ENCODE measurements at regions of chr19 and their contacts with region 1.

Region 1: GRCh38 chr19:19591133-19591825 is 27.2 kb downstream of the PBX4 start:
- DNase-seq: peak; percentile 58
- H3K4me3 Mint-ChIP-seq: peak overlapping the region; percentile 51
- H3K27ac Mint-ChIP-seq: peak overlapping the region; percentile 93
- H3K4me1 Mint-ChIP-seq: peaks cover 57% of the 10 kb centered on the region
- H3K27me3 Mint-ChIP-seq: no peaks in the 10 kb centered on the region

Region 2: DNA sequence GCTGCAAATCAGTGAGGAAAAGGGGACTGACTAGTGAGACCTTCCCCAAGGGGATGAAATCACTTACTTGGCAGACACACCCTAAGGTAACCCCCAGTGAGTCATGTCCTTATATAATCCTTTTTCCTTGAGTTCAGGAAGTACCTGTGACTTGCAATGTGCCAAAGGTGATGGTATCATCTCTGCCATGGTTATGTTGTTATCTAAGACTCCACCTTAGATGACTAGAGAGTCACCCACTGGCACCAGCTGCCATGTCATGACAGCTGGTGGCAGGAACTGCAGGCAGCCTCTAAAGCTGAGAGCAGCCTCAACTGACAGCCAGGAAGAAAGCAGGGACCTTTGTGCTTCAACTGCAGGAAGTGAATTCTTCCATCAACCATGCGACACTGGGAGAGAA is 14.7 kb after region 1 on chr19:
- intact Hi-C with region 1: loop called (anchors 2 kb)
- DNase-seq: no peak
- H3K4me3 Mint-ChIP-seq: peak overlapping the region; percentile 45
- H3K27ac Mint-ChIP-seq: peak overlapping the region; percentile 84
- H3K4me1 Mint-ChIP-seq: peaks cover 40% of the 10 kb centered on the region
- H3K27me3 Mint-ChIP-seq: no peaks in the 10 kb centered on the region

Region 3: DNA sequence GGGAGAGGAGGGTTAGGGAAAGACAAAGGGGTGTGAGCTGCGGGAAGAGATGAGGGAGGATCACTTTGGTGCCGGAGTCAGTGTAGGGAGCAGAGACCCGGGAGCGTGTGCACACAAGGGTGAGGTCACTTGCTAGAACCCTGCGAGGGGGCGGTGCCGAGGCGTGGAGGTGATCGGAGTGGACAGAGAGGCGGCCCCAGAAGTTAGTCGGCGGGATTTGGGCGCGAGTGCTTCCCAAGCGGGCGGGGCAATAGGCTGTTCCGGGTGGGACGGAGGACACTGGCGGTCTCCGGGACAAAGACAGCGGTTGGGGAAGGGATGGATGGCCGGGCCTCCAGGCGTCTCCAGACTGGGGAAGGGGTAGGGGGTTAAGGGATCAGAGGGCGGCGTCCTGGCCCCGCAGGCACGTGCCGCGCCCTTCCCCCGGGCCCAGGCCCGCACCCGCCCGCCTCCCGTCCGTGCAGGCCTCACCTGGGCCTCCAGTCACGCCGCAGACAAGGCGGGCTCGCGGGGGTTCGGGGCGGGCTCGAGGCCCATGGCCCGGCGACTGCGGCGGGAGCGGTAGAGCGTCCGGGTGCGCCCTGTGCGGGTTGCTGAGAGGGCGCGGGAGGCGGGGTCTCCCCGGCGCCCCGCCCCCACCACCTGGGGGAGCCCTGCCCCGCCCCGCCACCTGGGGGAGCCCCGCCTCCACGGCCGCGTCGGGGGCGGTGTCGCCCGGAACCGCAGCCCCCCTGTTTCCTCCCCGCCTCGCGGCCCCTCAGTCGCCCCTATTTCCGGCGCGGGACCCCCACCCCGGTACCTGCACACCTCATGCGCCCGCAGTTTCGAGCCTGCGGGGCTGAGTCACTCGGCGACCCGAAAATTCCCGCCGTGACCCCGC is 36.6 kb after region 1 on chr19 and contains the start of gene LPAR2:
- intact Hi-C with region 1: loop called (anchors 5 kb)
- DNase-seq: peak; percentile 56
- H3K4me3 Mint-ChIP-seq: peak within 1 kb of the TSS; percentile 92
- H3K27ac Mint-ChIP-seq: peak within 1 kb of the TSS; percentile 87
- H3K4me1 Mint-ChIP-seq: peaks cover 18% of the 10 kb centered on the region
- H3K27me3 Mint-ChIP-seq: no peaks in the 10 kb centered on the region
- total RNA-seq, gene LPAR2: 28.9 and 29.8 TPM in 2 replicates

Measured in activated T-helper 2 cell treated with anti-CD3 and anti-CD28 coated beads, Interferon-gamma antibody, Interleukin-2, Interleukin-4, amounts not matched to agents 10 μg/mL and 5 μg/mL and 100 μg/mL, durations not matched to agents 14 hours and 24 hours and 36 hours (primary cell).